ENCODE measurements at regions of chr12 and their contacts with region 1.

Region 1: DNA sequence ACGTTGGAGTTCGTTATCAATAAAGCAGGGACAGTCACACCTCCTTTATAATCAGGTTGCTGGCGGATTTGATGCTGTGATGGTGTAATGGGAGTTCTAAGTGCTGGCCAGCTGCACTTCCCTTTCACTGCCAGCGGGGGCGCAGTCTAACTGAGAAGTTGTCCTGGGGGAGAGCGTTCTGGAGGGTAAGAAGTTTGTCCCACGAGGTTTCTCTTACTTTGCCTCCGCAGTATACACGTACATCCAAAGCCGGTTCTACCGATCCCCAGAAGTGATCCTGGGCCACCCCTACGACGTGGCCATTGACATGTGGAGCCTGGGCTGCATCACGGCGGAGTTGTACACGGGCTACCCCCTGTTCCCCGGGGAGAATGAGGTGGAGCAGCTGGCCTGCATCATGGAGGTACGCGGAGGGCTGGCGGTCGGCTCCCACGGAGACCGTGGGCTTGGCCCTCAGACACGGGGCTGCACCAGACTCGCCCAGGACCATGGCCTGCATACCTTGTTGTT is 42.7 kb downstream of the DYRK4 start:
- DNase-seq: peak; percentile 80
- H3K27ac ChIP-seq: peak overlapping the region; percentile 44; the same call in 1 of the 2 replicates
- CTCF ChIP-seq: peak; percentile 83

Region 2: GRCh38 chr12:4648501-4649357 is 44.0 kb after region 1 on chr12 and contains the starts of genes AKAP3 and NDUFA9:
- CTCF ChIA-PET with region 1: interaction called, 11 read pairs
- POLR2A ChIA-PET with region 1: no interaction called
- DNase-seq: peak; percentile 73
- H3K27ac ChIP-seq: peak within 1 kb of the TSS; percentile 75
- CTCF ChIP-seq: no peak

Region 3: DNA sequence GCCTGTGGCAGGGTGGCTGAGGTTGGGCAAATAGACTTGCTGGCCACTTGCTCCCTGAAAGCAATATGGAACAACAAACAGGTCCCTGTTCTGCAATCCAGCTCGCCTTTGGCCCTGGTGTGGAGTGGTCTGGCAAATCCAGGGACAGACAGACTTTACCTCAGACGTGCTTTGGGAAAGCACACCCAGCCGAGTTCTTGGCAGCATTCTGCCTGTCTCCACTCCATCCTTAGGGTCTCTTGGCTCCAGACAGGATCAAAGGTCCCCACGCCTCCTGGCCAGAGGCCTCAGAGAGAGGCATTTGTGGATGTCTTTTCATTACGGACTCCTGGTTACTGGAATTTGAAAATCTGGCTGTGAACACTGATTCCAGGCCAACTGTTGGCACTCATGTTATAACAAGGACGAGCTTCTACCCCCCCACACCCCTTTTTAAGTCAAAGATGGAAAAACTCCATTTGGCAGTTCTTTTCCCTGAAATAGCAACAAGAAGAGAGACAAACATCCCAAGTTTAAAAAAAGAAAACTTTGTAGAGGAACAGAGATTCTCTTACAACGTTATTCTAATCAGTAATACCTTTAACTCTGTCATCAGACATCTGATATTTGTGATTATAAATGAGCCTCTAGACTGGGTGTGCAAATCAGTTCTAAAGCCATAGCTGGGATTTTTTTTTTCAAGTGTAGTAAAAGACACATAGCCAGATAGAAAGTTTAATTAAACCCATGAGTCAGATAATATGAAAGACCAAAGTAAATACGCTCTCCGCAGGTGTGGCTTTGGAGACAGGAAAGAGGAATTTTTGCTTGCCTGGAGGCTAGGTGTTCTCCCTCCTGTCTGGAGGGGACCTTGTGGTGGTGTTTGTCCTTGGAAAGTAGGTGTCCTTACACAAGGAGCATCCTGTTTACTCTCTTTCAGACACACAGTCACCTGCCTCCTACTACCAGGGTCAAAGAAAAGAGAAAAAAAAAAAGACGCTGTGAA is 176.2 kb after region 1 on chr12:
- CTCF ChIA-PET with region 1: no interaction called
- POLR2A ChIA-PET with region 1: no interaction called
- DNase-seq: peak; percentile 6
- H3K27ac ChIP-seq: no peak overlapping the region
- CTCF ChIP-seq: no peak